Colonic mucosa (tissue), 4 donors: ENCODE measurements at regions of chr7 and their contacts with region 1.

Region 1: GRCh38 chr7:117119192-117119924 is 166.1 kb downstream of the ST7 start:
- DNase-seq: peak; percentile 88
- H3K4me3 ChIP-seq: no peak overlapping the region
- H3K27ac ChIP-seq: no peak overlapping the region
- H3K4me1 ChIP-seq: peaks cover under 1% of the 10 kb centered on the region
- H3K27me3 ChIP-seq: no peaks in the 10 kb centered on the region
- CTCF ChIP-seq: peak; percentile 78

Region 2: GRCh38 chr7:116984917-116985316 is 134.4 kb before region 1 on chr7:
- intact Hi-C with region 1: loop called (anchors 2 kb)
- DNase-seq: no peak
- H3K4me3 ChIP-seq: no peak overlapping the region
- H3K27ac ChIP-seq: no peak overlapping the region
- H3K4me1 ChIP-seq: no peaks in the 10 kb centered on the region
- H3K27me3 ChIP-seq: no peaks in the 10 kb centered on the region
- CTCF ChIP-seq: peak; percentile 63

Region 3: GRCh38 chr7:117237646-117238045 is 118.3 kb after region 1 on chr7:
- intact Hi-C with region 1: no loop called
- DNase-seq: no peak
- H3K4me3 ChIP-seq: no peak overlapping the region
- H3K27ac ChIP-seq: no peak overlapping the region
- H3K4me1 ChIP-seq: no peaks in the 10 kb centered on the region
- H3K27me3 ChIP-seq: no peaks in the 10 kb centered on the region
- CTCF ChIP-seq: no peak

Region 4: GRCh38 chr7:117458977-117459583 is 339.7 kb after region 1 on chr7:
- intact Hi-C with region 1: no loop called
- DNase-seq: no peak
- H3K4me3 ChIP-seq: no peak overlapping the region
- H3K27ac ChIP-seq: no peak overlapping the region
- H3K4me1 ChIP-seq: no peaks in the 10 kb centered on the region
- H3K27me3 ChIP-seq: no peaks in the 10 kb centered on the region
- CTCF ChIP-seq: peak; percentile 51